ENCODE measurements at regions of chr12 and their contacts with region 1.

Region 1: DNA sequence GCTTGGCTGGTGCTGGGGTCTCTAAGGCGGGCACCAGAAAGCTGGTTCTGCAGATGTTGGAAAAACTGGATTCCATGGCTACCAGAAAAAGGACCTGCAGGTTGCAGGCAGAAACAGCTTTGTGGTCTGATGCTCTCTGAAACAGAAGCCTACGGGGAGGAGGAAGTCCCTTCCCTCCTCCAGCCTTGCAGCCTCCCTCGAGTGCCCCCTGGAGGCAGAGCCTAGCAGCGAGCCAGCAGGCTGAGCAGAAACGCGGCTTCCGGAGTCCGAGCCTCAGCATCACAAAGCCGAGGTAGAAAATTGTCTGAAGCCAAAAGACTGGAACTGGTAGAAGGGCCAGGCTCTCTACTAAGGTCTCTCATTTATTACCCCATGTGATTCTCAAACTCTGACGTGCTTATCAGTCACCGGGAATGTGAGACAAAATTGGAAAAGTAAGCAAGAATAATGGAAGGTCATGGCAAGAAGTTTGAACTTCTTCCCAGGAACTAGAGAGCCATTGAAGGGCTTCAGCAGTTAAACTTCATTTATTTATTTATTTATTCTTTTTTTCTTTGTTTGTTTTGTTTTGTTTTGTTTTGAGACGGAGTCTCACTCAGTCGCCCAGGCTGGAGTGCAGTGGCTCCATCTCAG is 82.2 kb upstream of the CPSF6 start:
- DNase-seq: peak; percentile 82 to 85 (median 83)
- H3K4me3 ChIP-seq: peak overlapping the region in 1 of 2 donors; percentile 6
- H3K4me3 Mint-ChIP-seq: peak overlapping the region; percentile 46 to 77 (median 70)
- H3K27ac ChIP-seq: no peak overlapping the region
- H3K27ac Mint-ChIP-seq: peak overlapping the region in 3 of 7 donors; percentile 56 to 69 (median 63)
- H3K4me1 ChIP-seq: peaks cover 20% of the 10 kb centered on the region
- H3K4me1 Mint-ChIP-seq: peaks cover 18 to 31% (median 22%) of the 10 kb centered on the region in 4 donors
- H3K27me3 ChIP-seq: no peaks in the 10 kb centered on the region
- H3K27me3 Mint-ChIP-seq: no peaks in the 10 kb centered on the region

Region 2: DNA sequence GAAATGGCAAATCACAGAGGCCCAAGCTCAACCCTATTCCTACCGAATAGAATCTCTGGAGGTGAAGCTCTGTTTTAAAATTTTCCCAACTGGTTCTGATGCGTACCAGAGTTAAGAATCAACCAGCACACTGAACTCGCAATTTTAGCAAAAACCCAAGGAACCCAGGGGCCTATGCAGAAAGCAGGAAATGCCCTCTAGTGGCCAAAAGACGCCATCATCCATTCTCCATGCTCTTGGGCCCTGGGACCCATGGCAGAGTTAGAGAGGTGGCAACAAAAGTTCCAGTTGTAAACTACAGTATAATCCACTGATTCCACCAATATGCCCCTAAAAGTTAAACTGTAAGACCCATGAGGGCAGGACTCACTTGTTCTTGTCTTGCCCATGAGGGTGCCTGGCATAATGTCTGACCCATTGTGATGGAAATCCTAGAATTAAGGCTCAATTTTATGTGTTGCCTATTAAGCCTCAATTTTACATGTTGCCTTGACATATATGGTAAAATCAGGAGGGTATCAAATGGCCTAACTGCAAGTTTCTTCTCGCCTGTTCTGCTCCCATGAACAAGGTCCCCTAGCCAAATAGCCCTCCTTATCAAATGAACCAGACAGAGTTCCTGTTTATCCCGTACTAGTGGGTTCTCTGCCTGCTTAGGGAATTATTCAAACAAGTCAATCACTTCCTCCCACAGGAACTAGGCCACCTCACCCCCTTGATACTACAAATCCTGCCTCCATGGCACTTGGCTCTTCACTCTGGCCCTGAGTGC is 86.6 kb before region 1 on chr12:
- CTCF ChIA-PET with region 1: no interaction called
- POLR2A ChIA-PET with region 1: no interaction called
- intact Hi-C with region 1: no loop called
- DNase-seq: peak; percentile 39 to 48 (median 42)
- H3K4me3 ChIP-seq: no peak overlapping the region
- H3K4me3 Mint-ChIP-seq: no peak overlapping the region
- H3K27ac ChIP-seq: no peak overlapping the region
- H3K27ac Mint-ChIP-seq: peak overlapping the region in 1 of 7 donors; percentile 3
- H3K4me1 ChIP-seq: no peaks in the 10 kb centered on the region
- H3K4me1 Mint-ChIP-seq: no peaks in the 10 kb centered on the region
- H3K27me3 ChIP-seq: no peaks in the 10 kb centered on the region
- H3K27me3 Mint-ChIP-seq: peaks cover 3 to 7% of the 10 kb centered on the region in 2 donors

Region 3: DNA sequence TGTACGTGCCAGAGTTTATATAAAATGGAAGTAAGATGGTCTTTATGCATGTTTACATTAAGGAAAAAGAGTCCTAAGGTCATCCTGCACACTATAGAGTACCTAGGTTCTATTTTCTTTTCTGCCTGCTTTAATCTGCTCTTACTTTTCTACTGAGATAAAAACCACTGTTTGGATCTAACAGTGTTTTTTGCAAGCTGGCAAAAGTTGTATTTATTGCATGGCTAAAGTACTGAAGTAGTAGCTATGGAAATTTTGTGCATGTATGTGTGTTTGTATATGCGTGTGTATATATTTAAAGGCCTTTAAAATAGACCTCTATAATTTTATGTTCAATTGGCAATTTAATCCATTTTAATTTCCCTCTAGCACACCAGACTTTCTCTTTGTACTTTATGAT is 16.1 kb before region 1 on chr12:
- CTCF ChIA-PET with region 1: interaction called, 10 read pairs
- POLR2A ChIA-PET with region 1: no interaction called
- intact Hi-C with region 1: no loop called
- DNase-seq: no peak
- H3K4me3 ChIP-seq: no peak overlapping the region
- H3K4me3 Mint-ChIP-seq: no peak overlapping the region
- H3K27ac ChIP-seq: no peak overlapping the region
- H3K27ac Mint-ChIP-seq: no peak overlapping the region
- H3K4me1 ChIP-seq: no peaks in the 10 kb centered on the region
- H3K4me1 Mint-ChIP-seq: no peaks in the 10 kb centered on the region
- H3K27me3 ChIP-seq: no peaks in the 10 kb centered on the region
- H3K27me3 Mint-ChIP-seq: peaks cover 7 to 13% of the 10 kb centered on the region in 2 donors

Region 4: DNA sequence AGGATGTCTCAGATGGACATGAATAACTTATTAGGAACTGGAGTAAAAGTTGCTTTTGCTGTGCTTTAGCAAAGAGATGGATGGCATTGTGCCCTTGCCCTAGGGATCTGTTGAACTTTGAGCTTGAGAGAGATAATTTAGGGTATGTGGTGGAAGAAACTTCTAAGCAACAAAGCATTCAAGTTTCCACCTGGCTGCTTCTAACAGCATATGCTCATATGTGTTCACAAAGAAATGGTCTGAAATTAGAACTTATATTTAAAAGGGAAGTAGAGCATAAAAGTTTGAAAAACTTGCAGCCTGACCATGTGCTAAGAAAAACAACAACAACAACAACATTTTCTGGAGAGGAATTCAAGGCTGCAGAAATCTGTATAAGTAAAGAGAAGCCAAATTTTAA is 74.3 kb after region 1 on chr12:
- CTCF ChIA-PET with region 1: interaction called, 17 read pairs
- POLR2A ChIA-PET with region 1: no interaction called
- intact Hi-C with region 1: no loop called
- DNase-seq: no peak
- H3K4me3 ChIP-seq: no peak overlapping the region
- H3K4me3 Mint-ChIP-seq: no peak overlapping the region
- H3K27ac ChIP-seq: no peak overlapping the region
- H3K27ac Mint-ChIP-seq: no peak overlapping the region
- H3K4me1 ChIP-seq: no peaks in the 10 kb centered on the region
- H3K4me1 Mint-ChIP-seq: no peaks in the 10 kb centered on the region
- H3K27me3 ChIP-seq: no peaks in the 10 kb centered on the region
- H3K27me3 Mint-ChIP-seq: no peaks in the 10 kb centered on the region

Region 5: DNA sequence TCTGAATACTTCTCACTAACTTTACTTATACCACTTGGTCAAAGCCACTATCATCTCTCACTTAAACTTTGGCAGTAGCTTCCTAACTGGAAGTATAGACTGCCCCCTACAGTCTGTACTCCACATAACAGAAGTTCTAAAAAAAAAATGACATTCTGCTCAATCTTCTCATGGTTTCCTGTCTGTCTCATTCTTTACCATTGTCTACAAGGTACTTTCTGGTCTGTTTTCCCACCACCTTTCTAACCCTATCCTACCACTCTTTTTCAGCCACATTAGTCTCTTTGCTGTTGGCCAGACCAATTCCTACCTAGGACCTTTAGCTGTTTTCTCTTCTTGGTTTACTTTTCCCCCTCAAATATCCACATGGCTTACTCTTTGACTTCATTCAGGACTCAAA is 96.9 kb after region 1 on chr12:
- CTCF ChIA-PET with region 1: interaction called, 208 read pairs
- POLR2A ChIA-PET with region 1: interaction called, 12 read pairs
- intact Hi-C with region 1: loop called (anchors 1 kb)
- DNase-seq: peak in 4 of 5 donors; percentile 65 to 68 (median 67)
- H3K4me3 ChIP-seq: no peak overlapping the region
- H3K4me3 Mint-ChIP-seq: no peak overlapping the region
- H3K27ac ChIP-seq: peak overlapping the region; percentile 36
- H3K27ac Mint-ChIP-seq: peak overlapping the region; percentile 57 to 92 (median 86)
- H3K4me1 ChIP-seq: peaks cover 23% of the 10 kb centered on the region
- H3K4me1 Mint-ChIP-seq: peaks cover 22 to 43% (median 34%) of the 10 kb centered on the region in 4 donors
- H3K27me3 ChIP-seq: no peaks in the 10 kb centered on the region
- H3K27me3 Mint-ChIP-seq: no peaks in the 10 kb centered on the region

Region 6: DNA sequence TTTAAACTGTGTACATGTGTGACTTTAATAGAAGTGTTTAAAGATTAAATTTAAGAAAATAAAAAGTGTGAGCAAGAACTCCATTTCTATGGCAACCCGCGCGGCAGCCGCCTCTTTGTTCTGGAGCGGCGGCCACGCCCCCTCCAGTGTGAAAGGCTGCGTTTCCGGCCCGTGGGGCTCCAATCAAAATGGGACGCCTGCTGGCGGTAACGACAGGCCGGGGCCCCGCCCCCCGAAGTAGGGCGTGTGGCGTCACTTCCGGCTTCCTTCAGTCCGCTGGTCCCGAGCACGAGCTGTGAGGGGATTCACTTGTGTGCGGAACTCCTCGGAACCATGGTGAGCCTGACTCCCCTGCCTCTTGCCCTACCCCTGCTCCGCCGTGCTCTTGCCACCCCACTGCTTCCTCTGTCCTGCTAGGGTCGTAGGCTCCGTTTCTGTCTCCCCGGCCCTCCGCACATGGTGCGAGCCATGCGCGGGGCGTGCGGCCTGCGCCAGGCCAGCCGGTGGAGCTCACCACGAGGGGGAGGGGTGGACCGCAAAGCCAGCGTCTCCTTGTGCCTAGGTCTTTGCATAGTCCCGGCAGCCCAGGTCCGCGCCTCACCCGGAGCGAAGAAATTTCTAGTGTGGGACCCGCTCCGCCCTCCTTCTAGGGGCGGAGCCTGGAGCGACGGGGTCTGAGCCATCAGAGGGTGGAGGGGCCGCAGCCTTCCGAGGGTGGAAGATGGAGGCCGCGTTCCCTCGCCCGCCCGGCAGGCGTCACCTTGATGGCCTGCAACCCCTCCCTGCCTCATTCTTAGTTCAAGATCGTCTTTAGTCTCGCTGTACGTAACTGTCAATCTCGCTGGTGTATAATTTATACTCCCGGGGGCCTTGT is 428.3 kb after region 1 on chr12 and contains the start of gene CCT2:
- CTCF ChIA-PET with region 1: interaction called, 4 read pairs
- POLR2A ChIA-PET with region 1: interaction called, 3 read pairs
- intact Hi-C with region 1: loop called (anchors 1 kb)
- DNase-seq: peak; percentile 91 to 96 (median 96)
- H3K4me3 ChIP-seq: peak within 1 kb of the TSS; percentile 90 to 93
- H3K4me3 Mint-ChIP-seq: peak within 1 kb of the TSS; percentile 94 to 97 (median 95)
- H3K27ac ChIP-seq: peak within 1 kb of the TSS; percentile 95
- H3K27ac Mint-ChIP-seq: peak within 1 kb of the TSS; percentile 96 to 99 (median 98)
- H3K4me1 ChIP-seq: peaks cover 16% of the 10 kb centered on the region
- H3K4me1 Mint-ChIP-seq: peaks cover 5 to 19% (median 10%) of the 10 kb centered on the region in 4 donors
- H3K27me3 ChIP-seq: no peaks in the 10 kb centered on the region
- H3K27me3 Mint-ChIP-seq: no peaks in the 10 kb centered on the region
- total RNA-seq, gene CCT2: 92.6 to 104 TPM